ENCODE measurements at regions of chr14 and their contacts with region 1.

Region 1: DNA sequence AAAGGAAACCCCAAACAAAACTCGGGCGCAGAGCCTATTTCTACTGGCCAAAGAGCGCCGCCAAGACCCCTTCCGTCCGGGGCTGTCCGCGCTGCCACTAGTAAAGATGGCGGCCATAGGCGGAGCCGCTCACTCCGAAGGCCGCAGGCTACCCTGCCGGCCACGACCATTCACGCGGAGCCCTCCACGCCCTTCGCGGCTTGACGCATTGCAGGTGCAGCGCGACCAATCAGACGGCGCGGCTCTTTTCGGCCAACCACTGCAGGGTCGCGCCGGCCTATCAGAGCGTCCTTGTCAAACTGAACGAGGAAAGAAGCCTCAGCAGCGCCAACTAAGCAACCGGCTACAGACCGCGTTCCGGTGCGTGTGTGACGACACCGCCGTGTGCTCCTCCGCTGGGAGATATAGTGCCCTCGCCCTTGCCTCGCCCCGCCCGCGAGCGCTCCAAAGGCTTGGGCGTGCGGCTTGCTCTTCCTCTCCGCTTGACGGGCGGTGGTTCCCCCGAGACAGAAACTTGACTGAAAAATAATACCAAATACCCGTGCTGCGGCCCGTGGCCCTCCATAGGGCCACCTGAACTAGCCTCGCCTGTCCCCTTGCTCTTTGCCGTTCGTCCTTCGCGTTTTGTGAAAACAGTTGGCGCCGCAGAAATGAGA is 13.6 kb upstream of the CALM1 start:
- DNase-seq: peak; percentile 99
- H3K4me3 ChIP-seq: peak overlapping the region; percentile 57 to 67 (median 65)
- H3K27ac ChIP-seq: peak overlapping the region; percentile 97
- H3K4me1 ChIP-seq: peaks cover 23% of the 10 kb centered on the region
- H3K27me3 ChIP-seq: no peaks in the 10 kb centered on the region
- CTCF ChIP-seq: no peak

Region 2: GRCh38 chr14:90331497-90332435 is 51.4 kb before region 1 on chr14 and contains the start of gene NRDE2:
- CTCF ChIA-PET with region 1: no interaction called
- dilution Hi-C with region 1: no loop called
- in situ Hi-C with region 1: no loop called
- intact Hi-C with region 1: loop called (anchors 5 kb)
- DNase-seq: peak; percentile 90
- H3K4me3 ChIP-seq: peak within 1 kb of the TSS; percentile 59 to 71 (median 68)
- H3K27ac ChIP-seq: peak within 1 kb of the TSS; percentile 74
- H3K4me1 ChIP-seq: peaks cover 8% of the 10 kb centered on the region
- H3K27me3 ChIP-seq: peaks cover 3% of the 10 kb centered on the region
- CTCF ChIP-seq: no peak
- total RNA-seq, gene NRDE2: 10.3 to 12.7 TPM

Region 3: DNA sequence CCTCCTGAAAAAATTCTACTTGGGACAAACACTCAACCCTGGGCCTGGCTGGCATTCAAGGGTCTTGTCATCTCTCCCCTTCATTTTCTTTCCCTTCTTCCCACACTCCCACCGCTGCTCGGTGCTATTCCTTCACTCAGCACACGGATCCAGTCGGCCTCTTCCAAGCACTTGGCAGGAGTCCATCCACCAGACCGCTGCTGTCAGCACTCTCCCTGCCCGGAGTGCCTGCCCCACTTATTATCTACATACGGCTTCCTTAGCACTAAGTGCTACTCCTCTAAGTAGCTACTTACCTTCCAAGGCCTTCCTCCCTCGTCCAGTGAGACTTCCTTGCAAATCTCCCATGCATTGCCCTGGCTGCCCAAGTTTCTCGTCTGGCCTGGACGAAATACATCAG is 43.5 kb after region 1 on chr14:
- CTCF ChIA-PET with region 1: no interaction called
- dilution Hi-C with region 1: no loop called
- in situ Hi-C with region 1: no loop called
- intact Hi-C with region 1: no loop called
- DNase-seq: no peak
- H3K4me3 ChIP-seq: no peak overlapping the region
- H3K27ac ChIP-seq: no peak overlapping the region
- H3K4me1 ChIP-seq: no peaks in the 10 kb centered on the region
- H3K27me3 ChIP-seq: no peaks in the 10 kb centered on the region
- CTCF ChIP-seq: no peak